ENCODE measurements at regions of chr2 and their contacts with region 1.

Region 1: DNA sequence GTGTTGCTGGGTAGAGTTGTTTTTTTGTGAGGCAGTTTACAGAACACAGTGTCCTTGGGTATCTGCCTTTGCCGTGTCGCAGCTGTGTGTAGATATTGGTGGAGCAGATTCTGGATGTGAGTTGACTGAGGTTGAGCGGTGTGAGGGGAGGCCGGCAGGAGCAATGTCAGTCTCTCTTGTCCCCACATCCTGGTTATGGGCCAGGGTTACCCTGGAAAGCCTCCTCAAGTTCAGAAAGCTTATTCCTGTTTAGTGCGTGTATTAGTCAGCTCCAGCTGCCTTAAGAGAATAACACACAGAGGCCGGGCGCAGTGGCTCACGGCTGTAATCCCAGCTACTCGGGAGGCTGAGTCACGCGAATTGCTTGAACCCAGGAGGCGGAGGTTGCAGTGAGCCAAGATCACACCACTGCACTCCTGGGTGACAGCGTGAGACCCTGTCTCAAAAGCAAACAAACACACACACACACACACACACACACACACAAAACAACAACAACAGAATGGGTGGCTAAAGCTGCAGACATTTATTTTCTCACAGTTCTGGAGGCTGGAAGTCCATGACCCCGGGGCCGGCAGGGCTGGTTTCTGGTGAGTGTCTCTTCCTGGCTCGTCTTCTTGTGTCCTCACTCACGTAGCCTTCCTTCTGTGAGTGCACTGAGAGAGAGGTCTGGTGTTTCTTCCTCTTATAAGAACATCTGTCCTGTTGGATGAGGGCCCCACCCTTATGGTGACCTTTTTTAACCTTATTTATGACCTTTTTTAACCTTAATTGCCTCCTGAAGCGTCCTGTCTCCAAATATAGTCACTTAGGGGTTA is 5.1 kb downstream of the NCK2 start:
- DNase-seq: peak in 6 of 9 experiments; percentile 42 to 54 (median 48)
- ATAC-seq: no peak
- H3K4me3 ChIP-seq: peak overlapping the region; percentile 25 to 34
- H3K4me3 Mint-ChIP-seq: peak overlapping the region; percentile 92
- H3K27ac ChIP-seq: peak overlapping the region; percentile 70 to 80
- H3K27ac Mint-ChIP-seq: peak overlapping the region; percentile 97
- H3K4me1 ChIP-seq: peaks cover 78% of the 10 kb centered on the region
- H3K4me1 Mint-ChIP-seq: peaks cover 84% of the 10 kb centered on the region
- H3K27me3 ChIP-seq: no peaks in the 10 kb centered on the region
- H3K27me3 Mint-ChIP-seq: no peaks in the 10 kb centered on the region
- CTCF ChIP-seq: no peak

Region 2: DNA sequence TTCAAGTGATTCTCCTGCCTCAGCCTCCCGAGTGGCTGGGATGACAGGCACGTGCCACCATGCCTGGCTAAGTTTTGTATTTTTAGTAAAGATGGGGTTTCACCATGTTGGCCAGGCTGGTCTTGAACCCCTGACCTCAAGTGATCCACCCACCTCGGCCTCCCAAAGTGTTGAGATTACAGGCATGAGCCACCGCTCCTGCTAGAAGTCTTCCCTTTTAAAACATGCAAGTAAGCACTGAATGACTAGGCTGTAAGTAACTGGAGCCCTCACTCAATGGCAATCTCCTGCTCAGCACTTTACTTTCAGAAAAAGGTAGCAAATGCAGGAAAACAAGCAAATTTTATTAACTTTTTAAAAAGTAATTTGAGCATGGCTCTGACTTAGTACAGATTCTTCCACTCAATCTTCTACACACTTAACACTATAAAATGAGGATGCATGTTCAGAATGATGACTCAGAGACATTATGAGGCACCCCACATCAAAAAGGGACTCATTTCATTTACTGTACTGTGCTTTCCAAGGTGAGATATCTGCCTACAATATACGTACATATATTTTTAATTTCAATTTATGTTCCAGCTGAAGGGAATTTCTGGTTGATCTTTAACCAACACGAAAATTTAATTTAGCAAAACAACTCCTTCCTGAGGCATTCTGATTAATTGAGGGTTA is 11.7 kb before region 1 on chr2:
- CTCF ChIA-PET with region 1: interaction called, 3 read pairs
- POLR2A ChIA-PET with region 1: interaction called, 6 read pairs
- intact Hi-C with region 1: loop called in 1 of 2 experiments (anchors 2 kb)
- DNase-seq: peak in 3 of 9 experiments; percentile 51 to 84 (median 71)
- ATAC-seq: peak; percentile 85
- H3K4me3 ChIP-seq: peak overlapping the region; percentile 21 to 36
- H3K4me3 Mint-ChIP-seq: peak overlapping the region; percentile 74
- H3K27ac ChIP-seq: peak overlapping the region; percentile 63 to 86
- H3K27ac Mint-ChIP-seq: peak overlapping the region; percentile 95
- H3K4me1 ChIP-seq: peaks cover 56% of the 10 kb centered on the region
- H3K4me1 Mint-ChIP-seq: peaks cover 85% of the 10 kb centered on the region
- H3K27me3 ChIP-seq: no peaks in the 10 kb centered on the region
- H3K27me3 Mint-ChIP-seq: no peaks in the 10 kb centered on the region
- CTCF ChIP-seq: no peak

Region 3: GRCh38 chr2:105761931-105762515 is 12.2 kb after region 1 on chr2:
- CTCF ChIA-PET with region 1: interaction called, 7 read pairs
- POLR2A ChIA-PET with region 1: interaction called, 9 read pairs
- intact Hi-C with region 1: loop called in 1 of 2 experiments (anchors 1 kb)
- DNase-seq: peak in 1 of 9 experiments; percentile 35
- ATAC-seq: no peak
- H3K4me3 ChIP-seq: peak overlapping the region in 1 of 2 experiments; percentile 9
- H3K4me3 Mint-ChIP-seq: peak overlapping the region; percentile 64
- H3K27ac ChIP-seq: peak overlapping the region in 1 of 2 experiments; percentile 71
- H3K27ac Mint-ChIP-seq: peak overlapping the region; percentile 93
- H3K4me1 ChIP-seq: peaks cover 95% of the 10 kb centered on the region
- H3K4me1 Mint-ChIP-seq: peaks cover 97% of the 10 kb centered on the region
- H3K27me3 ChIP-seq: no peaks in the 10 kb centered on the region
- H3K27me3 Mint-ChIP-seq: no peaks in the 10 kb centered on the region
- CTCF ChIP-seq: no peak

Measured in CD8-positive, alpha-beta T cell (primary cell).